ENCODE measurements at regions of chr11 and their contacts with region 1.

Region 1: GRCh38 chr11:88543902-88544655 is 206.5 kb upstream of the CTSC start:
- DNase-seq: peak; percentile 98
- ATAC-seq: peak; percentile 100
- H3K4me3 ChIP-seq: peak overlapping the region; percentile 14; the same call in 1 of the 2 replicates
- H3K27ac ChIP-seq: peak overlapping the region; percentile 8; the same call in 1 of the 2 replicates
- H3K4me1 ChIP-seq: peaks cover 14% of the 10 kb centered on the region
- H3K27me3 ChIP-seq: no peaks in the 10 kb centered on the region
- CTCF ChIP-seq: peak; percentile 100

Region 2: GRCh38 chr11:87463486-87464102 is 1080.5 kb before region 1 on chr11:
- CTCF ChIA-PET with region 1: no interaction called
- POLR2A ChIA-PET with region 1: no interaction called
- intact Hi-C with region 1: loop called (anchors 1 kb)
- DNase-seq: peak; percentile 84
- ATAC-seq: peak; percentile 93
- H3K4me3 ChIP-seq: no peak overlapping the region
- H3K27ac ChIP-seq: no peak overlapping the region
- H3K4me1 ChIP-seq: no peaks in the 10 kb centered on the region
- H3K27me3 ChIP-seq: no peaks in the 10 kb centered on the region
- CTCF ChIP-seq: peak; percentile 86

Region 3: GRCh38 chr11:87878373-87878779 is 665.7 kb before region 1 on chr11:
- CTCF ChIA-PET with region 1: interaction called, 6 read pairs
- POLR2A ChIA-PET with region 1: no interaction called
- intact Hi-C with region 1: loop called (anchors 1 kb)
- DNase-seq: peak; percentile 75
- ATAC-seq: peak; percentile 77
- H3K4me3 ChIP-seq: no peak overlapping the region
- H3K27ac ChIP-seq: peak overlapping the region; percentile 1; the same call in 1 of the 2 replicates
- H3K4me1 ChIP-seq: peaks cover 13% of the 10 kb centered on the region
- H3K27me3 ChIP-seq: no peaks in the 10 kb centered on the region
- CTCF ChIP-seq: peak; percentile 90

Region 4: GRCh38 chr11:88051396-88051795 is 492.7 kb before region 1 on chr11:
- CTCF ChIA-PET with region 1: no interaction called
- POLR2A ChIA-PET with region 1: no interaction called
- intact Hi-C with region 1: loop called (anchors 1 kb)
- DNase-seq: peak; percentile 91
- ATAC-seq: peak; percentile 80
- H3K4me3 ChIP-seq: peak overlapping the region; percentile 7; the same call in 1 of the 2 replicates
- H3K27ac ChIP-seq: peak overlapping the region; percentile 85
- H3K4me1 ChIP-seq: peaks cover 35% of the 10 kb centered on the region
- H3K27me3 ChIP-seq: no peaks in the 10 kb centered on the region
- CTCF ChIP-seq: no peak

Region 5: DNA sequence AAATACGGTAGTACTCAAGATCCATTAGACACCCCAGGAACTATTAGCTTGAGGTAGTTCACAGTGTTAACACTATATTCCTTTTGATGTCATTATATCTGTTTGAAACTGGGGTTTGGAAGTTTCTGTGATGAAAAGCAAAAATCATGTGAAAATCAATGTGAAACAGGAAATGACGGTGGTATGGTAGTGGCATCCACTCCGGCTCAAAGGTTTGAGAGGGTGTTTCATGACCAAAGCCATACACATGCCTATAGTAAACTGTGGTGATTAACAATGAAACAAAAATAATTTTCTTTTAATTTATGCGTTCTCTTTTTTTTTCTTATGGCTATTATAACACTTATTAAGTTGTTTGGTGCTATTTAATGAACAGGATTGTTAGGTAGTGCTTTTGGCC is 379.8 kb before region 1 on chr11:
- CTCF ChIA-PET with region 1: no interaction called
- POLR2A ChIA-PET with region 1: no interaction called
- intact Hi-C with region 1: loop called (anchors 2 kb)
- DNase-seq: no peak
- ATAC-seq: no peak
- H3K4me3 ChIP-seq: no peak overlapping the region
- H3K27ac ChIP-seq: no peak overlapping the region
- H3K4me1 ChIP-seq: no peaks in the 10 kb centered on the region
- H3K27me3 ChIP-seq: no peaks in the 10 kb centered on the region
- CTCF ChIP-seq: no peak

Region 6: GRCh38 chr11:88281317-88281712 is 262.8 kb before region 1 on chr11:
- CTCF ChIA-PET with region 1: no interaction called
- POLR2A ChIA-PET with region 1: no interaction called
- intact Hi-C with region 1: loop called (anchors 5 kb)
- DNase-seq: peak; percentile 44
- ATAC-seq: peak; percentile 31; the same call in 1 of the 2 replicates
- H3K4me3 ChIP-seq: no peak overlapping the region
- H3K27ac ChIP-seq: no peak overlapping the region
- H3K4me1 ChIP-seq: 0 out of 2 replicates have a peak, but pooled peaks cover 4% of the 10 kb centered on the region
- H3K27me3 ChIP-seq: no peaks in the 10 kb centered on the region
- CTCF ChIP-seq: peak; percentile 63

Region 7: GRCh38 chr11:88402192-88402715 is 141.8 kb before region 1 on chr11:
- CTCF ChIA-PET with region 1: no interaction called
- POLR2A ChIA-PET with region 1: no interaction called
- intact Hi-C with region 1: loop called (anchors 5 kb)
- DNase-seq: peak; percentile 78
- ATAC-seq: peak; percentile 50
- H3K4me3 ChIP-seq: peak overlapping the region; percentile 34; the same call in 1 of the 2 replicates
- H3K27ac ChIP-seq: peak overlapping the region; percentile 78
- H3K4me1 ChIP-seq: peaks cover 44% of the 10 kb centered on the region
- H3K27me3 ChIP-seq: no peaks in the 10 kb centered on the region
- CTCF ChIP-seq: no peak

Region 8: DNA sequence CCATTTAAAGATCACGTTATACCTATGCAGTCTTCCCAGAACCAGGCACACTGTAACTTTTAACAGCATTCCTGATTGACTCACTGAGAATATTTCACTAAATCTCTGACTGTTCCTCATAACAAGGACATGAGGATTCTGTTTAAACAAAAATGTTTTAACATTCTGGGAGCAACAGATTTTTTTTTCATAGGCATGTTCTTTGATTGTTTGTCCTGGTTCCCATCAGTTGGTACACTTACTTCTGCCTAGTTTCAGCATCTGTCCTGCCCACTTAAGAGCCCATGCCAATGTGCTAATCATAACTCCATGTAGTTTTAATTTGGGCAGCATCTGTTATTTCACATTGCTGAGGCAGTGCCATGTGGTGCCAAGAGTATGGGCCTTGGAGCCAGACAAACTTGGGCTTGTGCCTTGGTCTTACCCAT is 68.1 kb before region 1 on chr11:
- CTCF ChIA-PET with region 1: no interaction called
- POLR2A ChIA-PET with region 1: no interaction called
- intact Hi-C with region 1: no loop called
- DNase-seq: peak; percentile 53
- ATAC-seq: peak; percentile 35; the same call in 1 of the 2 replicates
- H3K4me3 ChIP-seq: no peak overlapping the region
- H3K27ac ChIP-seq: no peak overlapping the region
- H3K4me1 ChIP-seq: peaks cover 35% of the 10 kb centered on the region
- H3K27me3 ChIP-seq: no peaks in the 10 kb centered on the region
- CTCF ChIP-seq: no peak

Region 9: DNA sequence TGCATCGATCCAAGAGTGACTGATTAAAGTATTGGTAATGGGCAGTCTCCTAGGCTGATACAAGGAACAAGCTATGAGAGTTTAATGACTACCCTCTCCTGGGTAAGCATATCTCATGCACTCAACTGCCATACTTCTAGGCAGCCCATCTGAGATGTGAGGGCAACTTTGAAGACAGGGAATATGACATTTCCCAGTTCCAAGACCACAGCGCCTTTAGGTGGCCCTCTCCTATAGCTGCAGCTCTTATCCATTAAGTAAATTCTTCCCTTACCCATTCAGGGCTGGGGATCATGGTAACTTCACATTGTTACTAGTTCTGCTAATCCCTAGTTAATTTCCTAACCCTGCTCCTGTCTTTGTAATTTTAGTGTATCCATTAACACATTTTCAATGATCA is 49.2 kb before region 1 on chr11:
- CTCF ChIA-PET with region 1: no interaction called
- POLR2A ChIA-PET with region 1: no interaction called
- intact Hi-C with region 1: no loop called
- DNase-seq: peak; percentile 27
- ATAC-seq: no peak
- H3K4me3 ChIP-seq: no peak overlapping the region
- H3K27ac ChIP-seq: no peak overlapping the region
- H3K4me1 ChIP-seq: no peaks in the 10 kb centered on the region
- H3K27me3 ChIP-seq: no peaks in the 10 kb centered on the region
- CTCF ChIP-seq: peak; percentile 44

Region 10: DNA sequence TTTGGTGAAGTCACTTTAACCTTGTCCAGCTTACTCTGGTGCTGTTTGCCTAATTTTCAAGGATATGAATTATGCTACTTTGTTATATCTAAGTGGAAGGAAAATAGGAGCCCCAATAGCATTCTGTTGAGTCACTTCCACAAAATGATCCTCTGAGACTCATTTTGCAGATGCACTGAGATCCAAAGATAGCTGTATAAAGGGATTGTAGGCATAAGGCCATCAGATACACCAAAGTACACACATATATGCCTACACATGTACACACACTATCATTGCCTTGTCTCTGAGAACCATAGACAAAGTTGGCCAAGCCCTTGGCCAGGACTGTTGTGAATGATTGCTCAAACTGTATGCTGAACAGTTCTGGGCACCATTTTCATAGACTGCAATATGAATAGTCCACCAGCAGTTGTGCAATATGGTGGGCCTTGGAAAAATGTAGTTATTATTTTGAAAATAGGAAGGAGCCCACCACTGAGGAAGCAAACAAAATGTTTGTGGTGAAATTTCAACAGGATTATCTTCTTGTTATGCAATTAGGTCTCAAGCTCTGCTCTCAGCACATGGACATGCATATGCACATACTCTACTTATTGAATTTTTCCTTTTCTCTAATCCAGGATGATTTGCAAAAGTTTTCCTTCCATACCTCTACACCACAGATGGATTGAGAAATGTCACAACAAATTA is 20.6 kb before region 1 on chr11:
- CTCF ChIA-PET with region 1: no interaction called
- POLR2A ChIA-PET with region 1: no interaction called
- intact Hi-C with region 1: no loop called
- DNase-seq: peak; percentile 62
- ATAC-seq: peak; percentile 64
- H3K4me3 ChIP-seq: no peak overlapping the region
- H3K27ac ChIP-seq: no peak overlapping the region
- H3K4me1 ChIP-seq: peaks cover 9% of the 10 kb centered on the region
- H3K27me3 ChIP-seq: no peaks in the 10 kb centered on the region
- CTCF ChIP-seq: no peak

Measured in PC-3 (cell line).